ENCODE measurements at regions of chr19 and their contacts with region 1.

Region 1: GRCh38 chr19:1445185-1445931 is 4.6 kb upstream of the APC2 start:
- DNase-seq: peak; percentile 86
- H3K4me3 Mint-ChIP-seq: peak overlapping the region; percentile 61
- H3K27ac Mint-ChIP-seq: no peak overlapping the region
- H3K4me1 Mint-ChIP-seq: peaks cover 32% of the 10 kb centered on the region
- H3K27me3 Mint-ChIP-seq: peaks cover 21% of the 10 kb centered on the region

Region 2: DNA sequence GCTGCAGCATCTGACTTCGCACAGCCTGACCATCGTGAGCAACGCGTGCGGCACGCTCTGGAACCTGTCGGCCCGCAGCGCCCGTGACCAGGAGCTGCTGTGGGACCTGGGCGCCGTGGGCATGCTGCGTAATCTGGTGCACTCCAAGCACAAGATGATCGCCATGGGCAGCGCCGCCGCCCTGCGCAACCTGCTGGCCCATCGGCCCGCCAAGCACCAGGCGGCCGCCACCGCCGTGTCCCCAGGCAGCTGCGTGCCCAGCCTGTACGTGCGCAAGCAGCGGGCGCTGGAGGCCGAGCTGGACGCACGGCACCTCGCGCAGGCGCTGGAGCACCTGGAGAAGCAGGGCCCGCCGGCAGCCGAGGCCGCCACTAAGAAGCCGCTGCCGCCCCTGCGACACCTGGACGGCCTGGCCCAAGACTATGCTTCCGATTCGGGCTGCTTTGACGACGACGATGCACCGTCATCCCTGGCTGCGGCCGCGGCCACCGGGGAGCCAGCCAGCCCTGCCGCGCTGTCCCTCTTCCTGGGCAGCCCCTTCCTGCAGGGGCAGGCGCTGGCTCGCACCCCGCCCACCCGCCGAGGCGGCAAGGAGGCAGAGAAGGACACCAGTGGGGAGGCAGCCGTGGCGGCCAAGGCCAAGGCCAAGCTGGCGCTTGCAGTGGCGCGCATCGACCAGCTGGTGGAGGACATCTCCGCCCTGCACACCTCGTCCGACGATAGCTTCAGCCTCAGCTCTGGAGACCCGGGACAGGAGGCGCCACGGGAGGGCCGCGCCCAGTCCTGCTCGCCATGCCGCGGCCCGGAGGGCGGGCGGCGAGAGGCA is 20.0 kb after region 1 on chr19:
- CTCF ChIA-PET with region 1: interaction called, 20 read pairs
- POLR2A ChIA-PET with region 1: interaction called, 5 read pairs
- intact Hi-C with region 1: no loop called
- DNase-seq: peak; percentile 47
- H3K4me3 Mint-ChIP-seq: no peak overlapping the region
- H3K27ac Mint-ChIP-seq: no peak overlapping the region
- H3K4me1 Mint-ChIP-seq: peaks cover 3% of the 10 kb centered on the region
- H3K27me3 Mint-ChIP-seq: peaks cover 8% of the 10 kb centered on the region

Region 3: GRCh38 chr19:1470203-1471009 is 25.0 kb after region 1 on chr19:
- CTCF ChIA-PET with region 1: interaction called, 20 read pairs
- POLR2A ChIA-PET with region 1: interaction called, 5 read pairs
- intact Hi-C with region 1: no loop called
- DNase-seq: peak; percentile 77
- H3K4me3 Mint-ChIP-seq: peak overlapping the region; percentile 53
- H3K27ac Mint-ChIP-seq: no peak overlapping the region
- H3K4me1 Mint-ChIP-seq: peaks cover 9% of the 10 kb centered on the region
- H3K27me3 Mint-ChIP-seq: peaks cover 8% of the 10 kb centered on the region

Region 4: GRCh38 chr19:1513499-1514294 is 68.3 kb after region 1 on chr19:
- CTCF ChIA-PET with region 1: interaction called, 4 read pairs
- POLR2A ChIA-PET with region 1: no interaction called
- intact Hi-C with region 1: loop called (anchors 5 kb)
- DNase-seq: peak; percentile 81
- H3K4me3 Mint-ChIP-seq: peak overlapping the region; percentile 39
- H3K27ac Mint-ChIP-seq: no peak overlapping the region
- H3K4me1 Mint-ChIP-seq: peaks cover 4% of the 10 kb centered on the region
- H3K27me3 Mint-ChIP-seq: peaks cover 3% of the 10 kb centered on the region

Measured in activated CD4-positive, alpha-beta memory T cell treated with anti-CD3 and anti-CD28 coated beads for 36 hours (primary cell).